ENCODE measurements at regions of chr4 and their contacts with region 1.

Region 1: GRCh38 chr4:99054428-99054994 is 34.1 kb downstream of the ADH5 start:
- DNase-seq: no peak
- ATAC-seq: peak; percentile 32
- H3K4me3 Mint-ChIP-seq: no peak overlapping the region
- H3K27ac Mint-ChIP-seq: peak overlapping the region; percentile 77
- H3K4me1 Mint-ChIP-seq: peaks cover 43% of the 10 kb centered on the region
- H3K27me3 Mint-ChIP-seq: no peaks in the 10 kb centered on the region

Region 2: DNA sequence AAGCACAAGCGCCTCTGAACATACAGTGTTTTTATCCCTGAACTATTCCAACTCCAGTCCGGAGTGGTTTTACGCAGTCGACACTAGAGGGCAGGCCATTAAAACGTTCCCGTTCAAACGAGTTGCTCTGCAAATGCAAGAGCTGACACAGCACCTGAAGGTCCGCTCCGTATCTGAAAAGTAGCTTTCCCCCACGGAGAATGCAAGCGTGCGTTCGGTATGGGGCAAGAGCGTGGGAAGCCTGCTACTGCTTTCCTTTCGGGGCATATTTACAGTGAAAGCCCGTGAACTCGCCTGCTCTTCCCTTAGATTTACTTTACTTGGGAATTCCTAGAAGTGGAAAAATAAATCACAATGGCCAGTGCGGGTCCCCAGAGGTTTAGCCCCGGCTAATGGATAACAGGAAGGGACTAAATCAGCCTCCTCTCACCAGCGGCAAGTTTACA is 586.9 kb before region 1 on chr4:
- CTCF ChIA-PET with region 1: interaction called, 11 read pairs
- DNase-seq: peak; percentile 85
- ATAC-seq: peak; percentile 91
- H3K4me3 Mint-ChIP-seq: peak overlapping the region; percentile 52
- H3K27ac Mint-ChIP-seq: no peak overlapping the region
- H3K4me1 Mint-ChIP-seq: peaks cover 32% of the 10 kb centered on the region
- H3K27me3 Mint-ChIP-seq: peaks cover 3% of the 10 kb centered on the region

Region 3: GRCh38 chr4:98928505-98929340 is 125.8 kb before region 1 on chr4 and contains the start of gene EIF4E:
- CTCF ChIA-PET with region 1: interaction called, 11 read pairs
- DNase-seq: peak; percentile 99
- ATAC-seq: peak; percentile 77
- H3K4me3 Mint-ChIP-seq: peak within 1 kb of the TSS; percentile 89
- H3K27ac Mint-ChIP-seq: peak within 1 kb of the TSS; percentile 100
- H3K4me1 Mint-ChIP-seq: peaks cover 38% of the 10 kb centered on the region
- H3K27me3 Mint-ChIP-seq: no peaks in the 10 kb centered on the region
- total RNA-seq, gene EIF4E: 92.1 to 122 TPM

Region 4: GRCh38 chr4:99067617-99068016 is 13.1 kb after region 1 on chr4:
- CTCF ChIA-PET with region 1: interaction called, 12 read pairs
- DNase-seq: no peak
- ATAC-seq: no peak
- H3K4me3 Mint-ChIP-seq: no peak overlapping the region
- H3K27ac Mint-ChIP-seq: no peak overlapping the region
- H3K4me1 Mint-ChIP-seq: no peaks in the 10 kb centered on the region
- H3K27me3 Mint-ChIP-seq: no peaks in the 10 kb centered on the region

Region 5: DNA sequence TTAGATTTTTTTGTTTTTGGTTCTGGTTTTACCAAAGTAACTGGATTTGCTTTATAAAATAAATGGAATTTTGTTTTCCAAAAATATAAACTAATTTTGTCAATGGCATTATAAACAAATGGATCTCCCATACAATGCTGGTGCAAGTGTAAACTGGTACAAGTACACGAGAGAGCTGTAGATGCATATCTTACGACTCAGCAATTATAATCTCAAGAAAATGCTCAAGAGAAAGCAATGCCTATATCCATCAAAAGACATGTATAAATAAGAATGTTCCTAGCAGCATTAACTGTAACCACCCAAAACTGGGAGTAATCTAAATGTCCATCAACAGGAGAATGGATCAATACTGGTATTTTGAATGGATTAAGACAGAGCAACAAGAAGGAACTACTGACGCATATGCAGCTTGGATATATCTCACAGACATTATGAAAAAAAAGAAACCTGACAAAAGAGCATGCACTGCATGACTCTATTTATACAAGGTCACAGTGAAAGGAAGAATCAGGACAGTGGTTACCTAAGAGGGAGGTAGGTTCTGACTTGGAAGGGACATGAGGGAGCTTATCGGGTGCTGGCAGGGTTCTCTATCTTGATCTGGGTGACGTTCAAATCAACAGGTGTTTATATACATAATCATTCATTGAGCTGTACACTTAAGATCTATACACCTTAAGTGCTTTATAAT is 24.6 kb after region 1 on chr4:
- CTCF ChIA-PET with region 1: interaction called, 12 read pairs
- DNase-seq: no peak
- ATAC-seq: no peak
- H3K4me3 Mint-ChIP-seq: no peak overlapping the region
- H3K27ac Mint-ChIP-seq: no peak overlapping the region
- H3K4me1 Mint-ChIP-seq: peaks cover 4% of the 10 kb centered on the region
- H3K27me3 Mint-ChIP-seq: no peaks in the 10 kb centered on the region